ENCODE measurements at regions of chr12 and their contacts with region 1.

Region 1: DNA sequence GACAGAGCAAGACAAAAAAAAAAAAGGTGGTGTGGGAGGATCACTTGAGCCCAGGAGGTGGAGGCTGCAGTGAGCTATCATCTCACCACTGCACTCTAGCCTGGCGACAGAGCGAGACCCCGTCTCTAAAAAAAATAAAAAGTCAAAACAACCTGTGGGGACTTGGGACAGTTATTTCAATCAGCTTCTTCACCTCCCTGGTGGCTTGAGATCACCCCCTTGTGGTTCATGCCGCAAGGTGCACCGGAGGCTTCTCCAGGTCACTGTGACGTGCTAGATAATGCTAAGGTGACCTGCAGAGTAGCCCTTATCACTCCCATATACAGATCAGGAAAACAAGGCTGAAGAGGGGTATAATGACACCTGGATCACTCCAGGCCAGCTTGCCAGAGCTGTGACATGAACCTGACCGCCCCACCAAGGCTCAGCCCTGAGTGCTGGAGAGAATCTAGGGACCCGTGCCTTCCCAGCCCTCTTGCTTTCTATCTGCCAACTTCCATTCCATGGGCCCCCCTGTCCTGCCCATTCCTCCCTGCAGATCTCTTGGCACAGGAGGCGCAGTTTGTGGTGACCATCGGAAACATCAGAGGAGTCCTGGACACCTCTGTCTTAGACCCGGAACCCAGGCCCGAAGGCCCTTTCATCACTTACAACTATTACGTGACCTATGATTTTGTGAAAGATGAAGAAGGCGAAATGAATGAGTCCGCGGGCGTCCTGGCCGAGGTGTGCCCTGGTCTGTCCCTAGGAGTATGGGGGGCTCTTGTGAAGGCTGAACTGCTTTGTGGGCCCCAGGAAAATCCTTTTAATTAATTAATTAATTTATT is 8.1 kb downstream of the LRRC43 start:
- DNase-seq: peak; percentile 60
- H3K4me3 Mint-ChIP-seq: no peak overlapping the region
- H3K27ac Mint-ChIP-seq: no peak overlapping the region
- H3K4me1 Mint-ChIP-seq: no peaks in the 10 kb centered on the region
- H3K27me3 Mint-ChIP-seq: peaks cover 4% of the 10 kb centered on the region

Region 2: DNA sequence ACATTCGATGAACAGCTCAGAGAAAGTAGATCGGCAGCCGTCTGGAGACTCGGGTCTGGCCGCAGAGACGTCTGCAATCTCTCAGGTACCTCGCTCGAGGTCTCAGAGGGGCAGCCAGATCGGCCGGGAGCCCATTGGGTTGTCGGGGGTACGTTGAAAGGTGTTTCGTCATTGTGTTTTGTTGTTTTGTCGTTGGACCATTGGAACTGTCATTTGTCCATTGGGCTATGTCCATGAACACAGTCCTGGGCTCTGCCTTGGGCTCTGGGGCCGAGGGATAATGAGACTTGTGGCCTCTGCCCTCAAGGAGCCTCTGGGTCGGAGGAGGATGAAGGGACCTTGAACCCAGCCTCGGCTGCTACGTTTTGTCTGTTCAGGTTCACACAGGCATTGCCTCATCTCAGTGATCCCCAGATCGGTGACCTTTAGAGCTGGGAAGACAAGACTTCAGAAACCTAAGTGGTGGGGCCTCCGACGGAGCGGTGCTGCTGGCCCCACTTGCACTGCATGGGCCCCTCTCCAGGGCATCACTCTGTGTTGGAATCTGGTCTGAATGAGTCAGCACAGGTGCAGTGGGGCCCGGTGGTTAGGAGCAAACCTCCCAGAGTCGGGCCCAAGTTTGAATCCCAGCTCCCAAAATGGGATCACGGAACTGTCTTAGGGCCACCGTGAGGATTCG is 136.1 kb before region 1 on chr12:
- intact Hi-C with region 1: loop called (anchors 1 kb)
- DNase-seq: no peak
- H3K4me3 Mint-ChIP-seq: no peak overlapping the region
- H3K27ac Mint-ChIP-seq: no peak overlapping the region
- H3K4me1 Mint-ChIP-seq: peaks cover 2% of the 10 kb centered on the region
- H3K27me3 Mint-ChIP-seq: no peaks in the 10 kb centered on the region

Region 3: GRCh38 chr12:122159882-122160281 is 31.2 kb before region 1 on chr12:
- intact Hi-C with region 1: loop called (anchors 1 kb)
- DNase-seq: no peak
- H3K4me3 Mint-ChIP-seq: no peak overlapping the region
- H3K27ac Mint-ChIP-seq: no peak overlapping the region
- H3K4me1 Mint-ChIP-seq: peaks cover 18% of the 10 kb centered on the region
- H3K27me3 Mint-ChIP-seq: peaks cover 2% of the 10 kb centered on the region